Activated CD4-positive, alpha-beta T cell treated with anti-CD3 and anti-CD28 coated beads, Interleukin-2, amount 10 ng/mL, durations not matched to agents 24 days and 14 days (primary cell): ENCODE measurements at regions of chr1 and their contacts with region 1.

Region 1: GRCh38 chr1:113811888-113812660 is at the start of gene RSBN1:
- DNase-seq: peak; percentile 100
- H3K4me3 Mint-ChIP-seq: peak within 1 kb of the TSS; percentile 96
- H3K27ac Mint-ChIP-seq: peak within 1 kb of the TSS; percentile 96
- H3K4me1 Mint-ChIP-seq: peaks cover 21% of the 10 kb centered on the region
- H3K27me3 Mint-ChIP-seq: no peaks in the 10 kb centered on the region
- total RNA-seq, gene RSBN1: 20.9 and 21.5 TPM in 2 replicates

Region 2: DNA sequence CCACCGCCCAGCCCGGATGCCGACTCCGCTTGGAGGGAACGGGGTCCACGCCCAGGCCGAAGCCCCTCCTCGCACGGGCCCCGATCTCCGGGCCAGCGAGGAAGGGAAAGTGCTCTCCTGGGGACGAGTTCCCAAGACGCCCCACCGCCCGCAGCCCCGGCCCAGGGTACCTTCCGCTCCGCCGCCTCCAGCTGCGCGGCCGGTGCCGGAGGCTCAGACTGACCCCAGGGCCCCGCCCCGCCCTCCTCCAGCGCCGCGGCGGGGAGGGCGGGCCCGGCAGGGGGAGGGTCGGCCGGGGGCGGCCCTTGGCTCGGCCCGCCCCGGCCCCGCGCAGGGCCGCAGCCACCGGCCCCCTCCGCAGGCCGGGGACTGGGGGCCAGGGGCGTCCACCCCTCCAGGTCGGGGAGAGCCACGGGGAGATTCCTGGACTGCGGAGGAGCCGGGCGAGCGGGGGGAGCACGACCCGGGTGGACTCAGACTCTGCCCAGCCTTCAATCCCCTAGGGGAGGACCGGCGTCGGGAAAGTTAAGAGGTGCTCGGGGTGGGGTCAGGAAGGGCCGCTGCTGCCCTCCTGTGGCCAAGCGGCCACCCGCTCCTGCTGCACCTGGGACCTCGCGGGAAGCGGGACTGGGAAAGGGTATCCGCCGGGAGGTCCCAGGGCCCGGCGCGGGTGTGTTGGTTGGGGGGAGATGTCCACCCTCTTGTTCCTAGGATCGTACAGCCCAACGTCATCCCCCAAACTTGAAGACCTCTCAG is 1105.0 kb before region 1 on chr1 and contains the start of gene RHOC:
- intact Hi-C with region 1: loop called (anchors 5 kb)
- DNase-seq: peak; percentile 91
- H3K4me3 Mint-ChIP-seq: peak within 1 kb of the TSS; percentile 87
- H3K27ac Mint-ChIP-seq: peak within 1 kb of the TSS; percentile 94
- H3K4me1 Mint-ChIP-seq: peaks cover 56% of the 10 kb centered on the region
- H3K27me3 Mint-ChIP-seq: peaks cover 21% of the 10 kb centered on the region
- total RNA-seq, gene RHOC: 48.5 and 53.4 TPM in 2 replicates

Region 3: DNA sequence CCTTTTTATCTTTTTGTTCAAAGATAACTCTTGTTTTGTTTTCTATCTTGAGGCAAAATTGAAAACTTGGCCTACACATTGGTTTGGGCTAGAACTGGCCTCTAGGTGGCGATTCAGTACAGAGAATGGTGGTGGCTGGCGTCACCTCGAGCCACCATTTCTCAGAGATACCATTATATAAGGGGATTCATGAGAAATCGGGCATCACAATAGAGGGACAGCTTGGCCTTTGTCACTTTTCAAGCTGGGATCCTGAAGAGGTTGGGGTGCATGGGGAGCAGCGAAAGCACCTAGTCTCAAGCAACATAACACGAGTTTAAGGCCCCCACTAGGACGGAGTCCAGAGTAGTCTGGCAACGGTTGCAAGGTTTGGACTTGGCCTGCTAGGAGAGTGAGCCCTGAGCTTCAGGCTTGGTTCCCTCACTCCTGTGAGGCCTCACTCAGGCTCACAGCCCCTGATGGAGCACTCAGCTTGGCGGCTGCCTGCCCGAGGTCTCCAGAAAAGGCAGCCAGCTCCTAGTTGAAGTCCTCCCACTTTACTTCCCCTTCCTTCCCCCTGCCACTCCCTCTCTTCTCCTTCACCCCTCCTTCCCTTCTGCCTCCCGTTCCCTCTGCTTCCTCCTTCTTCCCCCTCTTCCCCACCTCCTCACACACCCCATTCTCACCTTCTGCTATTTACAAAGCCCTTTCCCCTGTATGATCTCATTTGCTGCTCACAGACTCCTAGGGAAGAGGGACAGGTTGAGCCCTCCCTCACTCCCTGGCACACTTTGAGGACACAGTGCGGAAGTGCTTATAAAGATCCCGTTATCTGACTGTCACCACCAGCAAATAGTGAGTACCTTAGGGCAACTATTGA is 671.3 kb before region 1 on chr1:
- intact Hi-C with region 1: loop called (anchors 5 kb)
- DNase-seq: peak; percentile 86
- H3K4me3 Mint-ChIP-seq: no peak overlapping the region
- H3K27ac Mint-ChIP-seq: no peak overlapping the region
- H3K4me1 Mint-ChIP-seq: peaks cover 18% of the 10 kb centered on the region
- H3K27me3 Mint-ChIP-seq: no peaks in the 10 kb centered on the region

Region 4: GRCh38 chr1:113742515-113742914 is 69.6 kb before region 1 on chr1:
- intact Hi-C with region 1: loop called (anchors 5 kb)
- DNase-seq: peak; percentile 67
- H3K4me3 Mint-ChIP-seq: peak overlapping the region; percentile 46
- H3K27ac Mint-ChIP-seq: peak overlapping the region; percentile 47
- H3K4me1 Mint-ChIP-seq: peaks cover 14% of the 10 kb centered on the region
- H3K27me3 Mint-ChIP-seq: no peaks in the 10 kb centered on the region

Region 5: DNA sequence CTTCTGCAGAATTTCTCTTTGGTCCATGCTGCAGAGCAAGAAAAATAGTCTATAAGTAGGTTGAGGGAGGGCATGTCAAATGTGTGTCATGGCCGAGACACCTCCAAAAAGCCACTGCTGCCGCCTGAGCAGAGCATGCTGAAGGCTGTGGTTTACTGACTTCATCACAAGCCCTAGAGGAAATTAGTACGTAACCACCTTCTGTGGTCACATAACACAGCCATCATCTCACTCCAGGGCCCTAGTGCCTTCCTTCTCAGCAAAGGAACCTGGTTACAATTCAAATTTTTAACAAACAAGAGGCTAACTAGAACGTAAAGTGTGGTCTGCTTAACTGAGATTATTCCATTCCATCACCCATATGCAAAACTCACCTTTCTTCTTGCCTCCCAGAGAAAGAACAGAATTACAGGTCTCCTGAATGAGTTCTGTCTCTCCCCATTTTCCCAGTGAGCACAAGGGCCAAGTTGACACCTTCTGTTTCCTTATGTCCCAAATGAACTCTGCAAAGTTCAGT is 59.6 kb after region 1 on chr1 and contains the start of gene PTPN22:
- intact Hi-C with region 1: loop called (anchors 1 kb)
- DNase-seq: peak; percentile 95
- H3K4me3 Mint-ChIP-seq: peak within 1 kb of the TSS; percentile 94
- H3K27ac Mint-ChIP-seq: peak within 1 kb of the TSS; percentile 96
- H3K4me1 Mint-ChIP-seq: peaks cover 63% of the 10 kb centered on the region
- H3K27me3 Mint-ChIP-seq: peaks cover 2% of the 10 kb centered on the region
- total RNA-seq, gene PTPN22: 60.4 and 64.1 TPM in 2 replicates

Region 6: DNA sequence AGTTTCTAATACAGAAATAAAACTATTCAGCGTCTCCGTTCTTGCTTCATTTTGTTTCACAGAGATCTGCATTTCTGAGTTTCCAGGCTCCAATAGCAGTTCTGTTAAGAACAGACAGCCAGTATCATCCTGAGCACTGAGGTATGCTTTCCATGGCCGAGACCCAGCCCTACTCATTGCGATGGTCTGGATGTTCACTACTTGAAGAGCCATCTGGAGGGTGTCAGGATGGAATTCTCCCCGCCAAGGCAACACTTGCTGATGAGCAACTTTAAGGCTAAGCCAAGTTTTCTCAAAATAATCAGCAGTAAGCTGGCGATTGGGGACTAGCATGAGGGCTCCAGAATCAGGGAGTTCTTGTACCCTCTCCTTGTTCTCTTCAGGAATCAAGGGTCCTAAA is 83.0 kb after region 1 on chr1:
- intact Hi-C with region 1: no loop called
- DNase-seq: no peak
- H3K4me3 Mint-ChIP-seq: no peak overlapping the region
- H3K27ac Mint-ChIP-seq: no peak overlapping the region
- H3K4me1 Mint-ChIP-seq: peaks cover 21% of the 10 kb centered on the region
- H3K27me3 Mint-ChIP-seq: no peaks in the 10 kb centered on the region